Sigmoid colon (tissue), 7 donors: ENCODE measurements at regions of chr10 and their contacts with region 1.

Region 1: DNA sequence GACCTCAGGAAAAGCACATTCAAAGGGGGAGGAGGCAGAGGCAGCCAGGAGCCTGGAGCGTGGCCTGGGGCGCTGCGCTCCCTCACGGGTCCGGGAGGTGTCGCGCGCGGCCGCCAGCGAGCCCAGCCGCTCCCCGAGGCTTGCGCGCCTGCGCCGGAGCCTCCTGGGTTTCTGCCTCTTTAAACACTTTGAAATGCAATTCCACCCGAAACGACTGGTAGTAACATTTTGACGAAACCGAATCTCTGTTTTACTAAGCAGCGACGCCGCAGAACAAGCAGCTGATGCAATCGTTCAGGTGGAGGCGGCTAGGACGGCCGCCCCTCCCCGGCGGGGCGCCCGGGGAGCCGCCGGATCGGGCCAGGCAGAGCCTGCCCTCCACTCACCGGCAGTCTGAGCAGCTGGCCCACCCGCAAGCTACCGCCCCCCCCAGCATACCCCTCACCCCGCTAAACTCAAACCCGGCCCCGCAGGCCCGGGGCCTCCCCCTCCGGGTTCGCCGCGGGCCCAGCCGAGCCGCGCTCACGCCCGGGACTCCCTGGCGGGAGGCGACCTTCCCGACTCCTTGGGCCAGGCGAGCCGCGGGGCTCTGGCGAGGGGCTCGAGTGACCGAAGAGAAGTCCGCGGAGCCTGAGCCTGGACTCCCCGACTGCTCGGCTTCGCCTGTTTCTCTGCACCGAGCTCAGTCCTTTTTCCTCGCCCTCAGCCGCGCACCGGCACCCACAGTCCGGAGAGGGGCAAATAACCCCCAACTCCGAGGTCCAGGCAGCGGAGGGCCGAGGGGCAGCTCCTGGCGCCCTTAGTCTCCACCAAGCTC is 3.2 kb downstream of the MKX start:
- DNase-seq: peak; percentile 92
- H3K4me3 ChIP-seq: peak overlapping the region; percentile 67 to 78 (median 75)
- H3K27ac ChIP-seq: peak overlapping the region; percentile 95 to 98 (median 97)
- H3K4me1 ChIP-seq: peaks cover 0 to 56% (median 38%) of the 10 kb centered on the region in 4 donors
- H3K27me3 ChIP-seq: peaks cover 0 to 37% (median 10%) of the 10 kb centered on the region in 3 donors
- CTCF ChIP-seq: peak; percentile 53 to 92 (median 80)
- EP300 ChIP-seq: no peak
- POLR2A ChIP-seq: peak in 1 of 2 donors; percentile 59

Region 2: DNA sequence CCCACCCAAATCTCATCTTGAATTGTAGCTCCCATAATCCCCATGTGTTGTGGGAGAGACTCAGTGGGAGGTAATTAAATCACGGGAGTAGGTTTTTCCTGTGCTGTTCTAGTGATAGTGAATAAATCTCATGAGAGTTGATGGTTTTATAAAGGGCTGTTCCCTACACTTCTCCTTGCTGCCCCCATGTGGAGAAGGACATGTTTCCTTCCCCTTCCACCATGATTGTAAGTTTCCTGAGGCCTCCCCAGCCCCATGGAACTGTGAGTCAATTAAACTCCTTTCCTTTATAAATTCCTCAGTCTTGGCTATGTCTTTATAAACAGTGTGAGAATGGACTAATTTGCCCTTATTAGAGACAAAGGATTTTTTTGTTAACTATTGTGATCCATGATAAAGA is 51.8 kb after region 1 on chr10:
- intact Hi-C with region 1: loop called (anchors 5 kb)
- DNase-seq: no peak
- H3K4me3 ChIP-seq: no peak overlapping the region
- H3K27ac ChIP-seq: no peak overlapping the region
- H3K4me1 ChIP-seq: no peaks in the 10 kb centered on the region
- H3K27me3 ChIP-seq: no peaks in the 10 kb centered on the region
- CTCF ChIP-seq: peak in 1 of 4 experiments; percentile 32
- EP300 ChIP-seq: no peak
- POLR2A ChIP-seq: no peak

Region 3: DNA sequence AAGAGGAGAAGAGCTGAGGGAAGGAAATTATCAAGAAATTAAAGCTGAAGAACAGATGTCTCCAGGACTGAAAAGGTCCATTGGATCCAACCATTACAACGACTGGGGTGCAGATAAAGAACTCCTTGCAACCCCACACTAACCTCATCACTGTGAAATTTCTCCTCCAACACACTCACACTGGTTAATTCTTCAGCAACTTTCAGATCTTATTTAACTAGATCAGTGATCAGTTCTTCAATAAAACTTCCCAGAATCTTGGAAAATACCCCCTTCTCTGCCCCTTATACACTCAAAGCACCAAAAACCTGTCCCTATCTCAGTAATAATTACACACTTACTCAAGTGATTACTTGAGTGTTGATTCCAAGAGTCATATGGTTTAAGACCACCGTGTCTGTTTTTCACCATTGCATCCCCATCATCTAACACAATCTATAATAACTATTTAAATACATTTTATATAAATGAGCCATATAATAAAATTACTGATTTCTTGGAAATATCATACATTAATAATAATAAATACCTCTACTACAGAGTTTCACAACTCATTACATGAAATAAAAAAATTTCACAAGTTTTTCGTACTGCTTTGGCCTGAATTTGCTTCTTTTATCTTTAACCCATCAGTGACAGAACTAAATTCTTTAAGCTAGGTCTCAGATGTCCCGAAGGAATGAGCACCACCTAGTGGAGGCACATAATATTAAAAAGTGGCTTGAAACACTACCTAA is 436.8 kb after region 1 on chr10:
- intact Hi-C with region 1: loop called (anchors 2 kb)
- DNase-seq: no peak
- H3K4me3 ChIP-seq: peak overlapping the region in 1 of 4 donors; percentile 32
- H3K27ac ChIP-seq: peak overlapping the region; percentile 61 to 75 (median 68)
- H3K4me1 ChIP-seq: peaks cover 0 to 44% (median 38%) of the 10 kb centered on the region in 4 donors
- H3K27me3 ChIP-seq: no peaks in the 10 kb centered on the region
- CTCF ChIP-seq: peak; percentile 30 to 78 (median 68)
- EP300 ChIP-seq: no peak
- POLR2A ChIP-seq: no peak

Region 4: GRCh38 chr10:28302638-28303488 is 560.5 kb after region 1 on chr10 and contains the start of gene MPP7:
- intact Hi-C with region 1: loop called (anchors 2 kb)
- DNase-seq: peak; percentile 98
- H3K4me3 ChIP-seq: peak within 1 kb of the TSS; percentile 77 to 96 (median 88)
- H3K27ac ChIP-seq: peak within 1 kb of the TSS; percentile 89 to 96 (median 94)
- H3K4me1 ChIP-seq: peaks cover 0 to 45% (median 20%) of the 10 kb centered on the region in 4 donors
- H3K27me3 ChIP-seq: no peaks in the 10 kb centered on the region
- CTCF ChIP-seq: peak in 2 of 4 experiments; percentile 34 to 69
- EP300 ChIP-seq: no peak
- POLR2A ChIP-seq: no peak
- total RNA-seq, gene MPP7: 29.7 to 50.3 (median 37.2) TPM